Heart left ventricle (tissue), 16 donors: ENCODE measurements at regions of chr6 and their contacts with region 1.

Region 1: GRCh38 chr6:53492860-53493634 is 51.9 kb downstream of the GCLC start:
- DNase-seq: no peak
- ATAC-seq: peak; percentile 58 to 80 (median 76)
- H3K4me3 ChIP-seq: peak overlapping the region in 7 of 12 donors; percentile 4 to 37 (median 13)
- H3K27ac ChIP-seq: no peak overlapping the region
- H3K4me1 ChIP-seq: peaks cover 0 to 10% (median 0%) of the 10 kb centered on the region in 12 donors
- H3K27me3 ChIP-seq: no peaks in the 10 kb centered on the region
- CTCF ChIP-seq: peak; percentile 58 to 85 (median 78)
- POLR2A ChIP-seq: no peak

Region 2: GRCh38 chr6:53107091-53107490 is 386.0 kb before region 1 on chr6:
- intact Hi-C with region 1: loop called in 1 of 10 experiments (anchors 5 kb)
- DNase-seq: no peak
- ATAC-seq: no peak
- H3K4me3 ChIP-seq: no peak overlapping the region
- H3K27ac ChIP-seq: peak overlapping the region in 1 of 12 donors; percentile 33
- H3K4me1 ChIP-seq: peaks cover 0 to 5% (median 0%) of the 10 kb centered on the region in 12 donors
- H3K27me3 ChIP-seq: no peaks in the 10 kb centered on the region
- CTCF ChIP-seq: no peak
- POLR2A ChIP-seq: no peak

Region 3: DNA sequence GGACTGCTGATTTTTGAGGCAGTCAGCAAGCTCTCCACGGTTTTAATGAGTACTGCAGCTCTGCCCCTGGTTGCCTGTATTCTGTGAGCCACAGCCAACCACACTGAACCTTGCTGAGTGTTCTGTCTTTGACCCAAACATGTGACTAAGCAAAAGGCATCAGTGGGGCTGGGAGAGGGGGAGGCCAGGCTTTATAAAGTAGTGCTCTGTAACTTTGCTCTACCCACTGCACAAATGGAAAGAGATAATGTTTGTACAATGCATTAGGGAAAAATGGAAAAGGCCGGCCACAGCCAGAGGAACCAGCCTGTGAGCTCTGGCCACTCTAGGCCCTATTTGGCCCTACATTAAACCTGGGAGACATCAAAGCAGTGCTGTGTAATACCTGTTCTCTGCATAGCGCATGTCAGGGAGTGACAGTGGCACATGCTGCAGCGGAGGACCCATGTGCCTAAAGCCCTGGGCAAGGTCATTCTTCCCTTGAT is 150.5 kb after region 1 on chr6:
- intact Hi-C with region 1: loop called in 2 of 10 experiments (anchors 2 to 5 kb)
- DNase-seq: no peak
- ATAC-seq: peak; percentile 33 to 77 (median 64)
- H3K4me3 ChIP-seq: no peak overlapping the region
- H3K27ac ChIP-seq: peak overlapping the region in 5 of 12 donors; percentile 23 to 43 (median 27)
- H3K4me1 ChIP-seq: peaks cover 0 to 35% (median under 1%) of the 10 kb centered on the region in 12 donors
- H3K27me3 ChIP-seq: no peaks in the 10 kb centered on the region
- CTCF ChIP-seq: no peak
- POLR2A ChIP-seq: no peak

Region 4: DNA sequence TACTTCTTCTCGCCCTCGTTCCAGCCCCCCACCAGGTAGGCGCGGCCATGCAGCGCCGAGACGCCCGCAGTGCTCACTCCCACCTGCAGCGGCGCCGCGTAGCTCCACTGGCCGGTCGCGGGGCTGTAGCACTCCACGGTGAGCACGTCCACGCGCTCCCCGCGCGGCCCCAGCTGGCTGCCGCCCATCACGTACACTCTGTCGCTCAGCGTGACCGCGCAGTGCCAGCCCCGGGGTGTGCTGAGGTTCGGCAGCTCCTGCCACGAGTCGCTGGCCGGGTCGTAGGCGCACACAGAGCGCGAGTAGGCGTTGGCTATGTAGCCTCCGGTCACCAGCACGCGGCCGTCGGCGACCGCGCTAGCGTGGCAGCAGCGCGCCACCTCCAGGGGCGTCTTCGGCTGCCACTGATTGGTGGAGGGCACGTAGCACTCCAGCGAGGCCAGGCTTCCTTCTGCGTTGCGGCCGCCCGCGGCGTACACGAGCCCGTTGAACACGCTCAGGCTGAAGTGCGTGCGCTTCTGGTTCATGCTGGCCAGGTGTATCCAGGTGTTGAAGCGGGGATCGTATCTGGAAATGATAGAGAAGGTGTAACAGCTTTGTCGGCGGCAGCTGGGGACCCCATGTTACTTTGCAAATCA is 158.8 kb after region 1 on chr6:
- intact Hi-C with region 1: loop called in 9 of 10 experiments (anchors 2 to 5 kb)
- DNase-seq: peak; percentile 44 to 83 (median 57)
- ATAC-seq: peak; percentile 42 to 82 (median 78)
- H3K4me3 ChIP-seq: peak overlapping the region; percentile 21 to 66 (median 48)
- H3K27ac ChIP-seq: peak overlapping the region in 5 of 12 donors; percentile 6 to 39 (median 12)
- H3K4me1 ChIP-seq: peaks cover 0 to 62% (median 18%) of the 10 kb centered on the region in 12 donors
- H3K27me3 ChIP-seq: peaks cover 0 to 5% (median 0%) of the 10 kb centered on the region in 9 donors
- CTCF ChIP-seq: peak in 6 of 12 donors; percentile 6 to 35 (median 14)
- POLR2A ChIP-seq: no peak

Region 5: GRCh38 chr6:53718597-53719460 is 225.8 kb after region 1 on chr6:
- intact Hi-C with region 1: loop called in 3 of 10 experiments (anchors 2 to 5 kb)
- DNase-seq: peak in 3 of 5 donors; percentile 32 to 34 (median 33)
- ATAC-seq: peak in 2 of 4 donors; percentile 79 to 83
- H3K4me3 ChIP-seq: no peak overlapping the region
- H3K27ac ChIP-seq: no peak overlapping the region
- H3K4me1 ChIP-seq: peaks cover 0 to 4% (median 0%) of the 10 kb centered on the region in 12 donors
- H3K27me3 ChIP-seq: peaks cover 0 to 3% (median 0%) of the 10 kb centered on the region in 9 donors
- CTCF ChIP-seq: peak; percentile 76 to 89 (median 84)
- POLR2A ChIP-seq: no peak

Region 6: DNA sequence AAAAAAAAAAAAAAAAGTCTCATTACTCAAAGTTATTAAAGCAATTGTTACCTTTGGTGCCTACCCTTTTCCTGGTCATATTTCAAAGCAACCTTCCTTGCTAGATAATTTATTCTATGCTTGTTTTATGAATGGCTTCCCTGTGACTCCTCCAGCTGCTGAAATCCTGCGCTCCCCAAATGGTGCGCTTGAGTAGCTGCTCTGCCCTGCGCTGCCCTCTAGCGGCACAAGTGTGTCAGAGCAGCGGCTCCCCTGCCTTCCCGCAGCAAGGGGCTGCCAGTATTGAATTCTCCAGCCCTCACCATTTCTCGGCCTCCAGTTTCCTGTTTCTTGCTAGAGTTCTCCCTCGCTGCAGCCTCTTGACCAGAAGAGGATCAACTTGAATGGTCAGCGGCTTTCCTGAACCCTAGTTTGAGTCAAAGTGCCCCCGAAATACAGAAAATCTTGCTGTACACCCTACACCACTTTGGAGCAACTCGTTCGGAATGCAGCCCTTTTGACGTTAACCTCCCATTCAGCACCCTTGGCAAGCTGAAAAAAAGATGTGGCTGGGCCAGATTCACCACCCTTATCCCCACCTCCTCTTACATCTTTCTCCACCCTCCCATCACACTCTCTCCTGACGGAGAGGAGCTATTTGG is 232.9 kb after region 1 on chr6:
- intact Hi-C with region 1: loop called (anchors 1 to 5 kb)
- DNase-seq: peak; percentile 68 to 86 (median 78)
- ATAC-seq: peak in 3 of 4 donors; percentile 88 to 89 (median 89)
- H3K4me3 ChIP-seq: no peak overlapping the region
- H3K27ac ChIP-seq: no peak overlapping the region
- H3K4me1 ChIP-seq: peaks cover 0 to 6% (median under 1%) of the 10 kb centered on the region in 12 donors
- H3K27me3 ChIP-seq: peaks cover 0 to 3% (median 0%) of the 10 kb centered on the region in 9 donors
- CTCF ChIP-seq: peak; percentile 88 to 99 (median 96)
- POLR2A ChIP-seq: no peak

Region 7: GRCh38 chr6:53956068-53956711 is 463.1 kb after region 1 on chr6:
- intact Hi-C with region 1: loop called in 1 of 10 experiments (anchors 5 kb)
- DNase-seq: peak; percentile 59 to 75 (median 70)
- ATAC-seq: peak; percentile 93 to 97 (median 96)
- H3K4me3 ChIP-seq: no peak overlapping the region
- H3K27ac ChIP-seq: no peak overlapping the region
- H3K4me1 ChIP-seq: no peaks in the 10 kb centered on the region
- H3K27me3 ChIP-seq: no peaks in the 10 kb centered on the region
- CTCF ChIP-seq: peak; percentile 38 to 81 (median 66)
- POLR2A ChIP-seq: no peak